A549 (cell line): ENCODE measurements at regions of chr1 and their contacts with region 1.

Region 1: GRCh38 chr1:225845571-225846259 is 35.8 kb downstream of the EPHX1 start:
- DNase-seq: peak; percentile 72 to 88
- ATAC-seq: peak; percentile 80 to 88
- H3K4me3 ChIP-seq: no peak overlapping the region
- H3K27ac ChIP-seq: peak overlapping the region in 1 of 2 experiments; percentile 60; a peak in 3 of 6 replicates
- H3K4me1 ChIP-seq: peaks cover 6% of the 10 kb centered on the region; the same call in 1 of the 3 replicates
- CTCF ChIP-seq: peak; percentile 66
- EP300 ChIP-seq: no peak
- POLR2A ChIP-seq: no peak
- RAD21 ChIP-seq: peak; percentile 85 to 93

Region 2: GRCh38 chr1:225480825-225481434 is 364.8 kb before region 1 on chr1:
- CTCF ChIA-PET with region 1: interaction called, 69 read pairs
- POLR2A ChIA-PET with region 1: no interaction called
- DNase-seq: peak; percentile 54 to 76
- ATAC-seq: peak; percentile 79 to 87
- H3K4me3 ChIP-seq: no peak overlapping the region
- H3K27ac ChIP-seq: no peak overlapping the region; a peak in 1 of 6 replicates
- H3K4me1 ChIP-seq: no peaks in the 10 kb centered on the region
- CTCF ChIP-seq: peak; percentile 72
- EP300 ChIP-seq: no peak
- POLR2A ChIP-seq: no peak
- RAD21 ChIP-seq: peak; percentile 79 to 85

Region 3: GRCh38 chr1:225670806-225671733 is 174.6 kb before region 1 on chr1:
- CTCF ChIA-PET with region 1: no interaction called
- POLR2A ChIA-PET with region 1: no interaction called
- DNase-seq: no peak
- ATAC-seq: 0 out of 6 replicates have a peak, but pooled peaks of 1 of the 2 experiments have one; percentile 19
- H3K4me3 ChIP-seq: no peak overlapping the region
- H3K27ac ChIP-seq: peak overlapping the region in 1 of 2 experiments; percentile 29; a peak in 1 of 6 replicates
- H3K4me1 ChIP-seq: 0 out of 3 replicates have a peak, but pooled peaks cover 3% of the 10 kb centered on the region
- CTCF ChIP-seq: no peak
- EP300 ChIP-seq: no peak
- POLR2A ChIP-seq: no peak
- RAD21 ChIP-seq: no peak

Region 4: DNA sequence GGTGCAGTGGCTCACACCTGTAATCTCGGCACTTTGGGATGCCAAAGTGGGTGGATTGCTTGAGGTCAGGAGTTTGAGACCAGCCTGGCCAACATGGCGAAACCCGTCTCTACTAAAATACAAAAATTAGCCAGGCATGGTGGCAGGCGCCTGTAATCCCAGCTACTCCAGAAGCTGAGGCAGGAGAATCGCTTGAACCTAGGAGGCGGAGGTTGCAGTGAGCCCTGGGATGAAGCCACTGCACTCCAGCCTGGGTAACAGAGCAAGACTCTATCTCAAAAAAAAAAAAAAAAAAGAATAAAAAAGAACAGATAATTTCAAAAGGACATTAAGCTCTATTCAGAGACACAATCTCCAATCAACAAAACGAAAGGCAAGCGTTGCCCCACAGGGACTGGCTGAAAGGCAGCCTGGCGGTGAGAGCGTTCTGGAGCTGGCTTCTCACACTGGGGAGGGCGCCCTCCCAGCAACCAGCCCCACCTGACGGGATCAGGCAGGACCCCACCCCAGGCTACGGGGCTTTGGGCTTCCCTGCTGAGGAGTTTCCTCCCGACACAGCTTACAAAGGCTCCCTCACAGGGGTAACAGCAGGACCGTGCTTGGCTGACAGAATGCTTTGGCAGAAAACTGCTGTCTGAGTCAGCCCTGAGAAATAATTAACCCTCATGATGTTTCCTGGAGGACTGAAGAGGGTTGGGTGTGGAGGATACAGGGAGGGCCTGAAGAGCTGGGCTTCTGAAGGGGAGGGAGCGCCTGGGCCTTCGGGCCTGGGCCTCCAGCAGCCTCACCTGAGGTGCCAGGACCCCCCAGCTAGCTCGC is 99.1 kb before region 1 on chr1:
- CTCF ChIA-PET with region 1: no interaction called
- POLR2A ChIA-PET with region 1: no interaction called
- DNase-seq: peak; percentile 88 to 89
- ATAC-seq: peak; percentile 98 to 99
- H3K4me3 ChIP-seq: peak overlapping the region; percentile 35
- H3K27ac ChIP-seq: peak overlapping the region; percentile 90 to 92
- H3K4me1 ChIP-seq: peaks cover 28% of the 10 kb centered on the region
- CTCF ChIP-seq: no peak
- EP300 ChIP-seq: no peak
- POLR2A ChIP-seq: 0 out of 2 replicates have a peak, but pooled peaks have one; percentile 5
- RAD21 ChIP-seq: peak; percentile 23 to 31; a peak in 2 of 5 replicates

Region 5: GRCh38 chr1:225809842-225810578 is 35.7 kb before region 1 on chr1 and contains the start of gene EPHX1:
- CTCF ChIA-PET with region 1: interaction called, 24 read pairs
- POLR2A ChIA-PET with region 1: no interaction called
- DNase-seq: peak; percentile 87 to 97
- ATAC-seq: peak; percentile 85 to 86
- H3K4me3 ChIP-seq: peak within 1 kb of the TSS; percentile 86
- H3K27ac ChIP-seq: peak within 1 kb of the TSS; percentile 93 to 99
- H3K4me1 ChIP-seq: peaks cover 40% of the 10 kb centered on the region
- CTCF ChIP-seq: peak; percentile 30; the same call in 2 of the 3 replicates
- EP300 ChIP-seq: 0 out of 5 replicates have a peak, but pooled peaks of 1 of the 2 experiments have one; percentile 8
- POLR2A ChIP-seq: peak; percentile 97
- RAD21 ChIP-seq: peak; percentile 25 to 37; a peak in 3 of 5 replicates
- polyA plus RNA-seq, gene EPHX1: 150 and 212 TPM in 2 replicates

Region 6: DNA sequence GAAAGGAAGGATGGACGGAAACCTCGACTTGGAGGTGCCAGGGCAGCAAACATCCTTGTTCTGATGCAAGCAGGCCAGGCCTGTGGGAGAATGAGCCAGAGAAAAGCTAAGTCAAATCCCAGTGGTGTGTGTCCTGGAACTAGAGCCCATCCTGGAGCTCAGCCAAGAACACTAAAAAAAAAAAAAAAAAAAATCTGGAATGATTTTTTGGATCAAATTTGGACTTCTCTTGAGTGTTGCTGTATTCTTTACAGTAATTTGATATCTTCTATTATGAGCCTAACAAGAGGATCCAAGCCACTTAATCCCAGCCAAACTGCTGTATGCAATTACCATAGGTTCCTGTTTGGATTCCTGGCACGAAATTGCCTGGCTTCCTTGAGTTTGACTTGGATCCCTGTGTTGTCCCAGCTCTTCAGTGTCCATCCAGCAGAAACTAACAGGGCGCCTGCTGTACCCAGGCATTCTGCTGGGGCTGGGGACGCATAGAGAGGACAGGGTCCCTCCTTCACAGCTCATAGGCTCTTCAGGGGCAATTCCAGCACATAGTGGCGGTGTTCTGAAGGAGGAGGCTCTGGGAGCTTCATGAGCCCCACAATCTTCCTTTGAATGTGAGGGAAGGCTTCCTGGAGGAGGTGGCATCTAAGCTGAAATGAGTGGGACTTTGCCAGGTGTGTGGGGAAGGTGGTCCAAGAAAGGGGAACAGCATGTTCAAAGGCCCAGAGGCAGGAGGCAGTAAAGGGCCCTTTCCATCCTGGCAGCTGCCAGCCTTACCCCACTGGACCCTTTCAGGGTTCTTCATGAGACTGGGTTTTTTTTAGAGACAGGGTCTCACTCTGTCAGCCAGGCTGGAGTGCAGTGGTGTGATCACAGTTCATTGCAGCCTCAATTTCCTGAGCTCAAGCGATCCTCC is 11.0 kb before region 1 on chr1:
- CTCF ChIA-PET with region 1: interaction called, 11 read pairs
- POLR2A ChIA-PET with region 1: no interaction called
- DNase-seq: no peak
- ATAC-seq: peak in 1 of 2 experiments; percentile 48; a peak in 3 of 6 replicates
- H3K4me3 ChIP-seq: no peak overlapping the region
- H3K27ac ChIP-seq: no peak overlapping the region
- H3K4me1 ChIP-seq: no peaks in the 10 kb centered on the region
- CTCF ChIP-seq: no peak
- EP300 ChIP-seq: no peak
- POLR2A ChIP-seq: no peak
- RAD21 ChIP-seq: no peak

Region 7: GRCh38 chr1:225977937-225978748 is 132.4 kb after region 1 on chr1:
- CTCF ChIA-PET with region 1: interaction called, 13 read pairs
- POLR2A ChIA-PET with region 1: no interaction called
- DNase-seq: no peak
- ATAC-seq: 0 out of 6 replicates have a peak, but pooled peaks of 1 of the 2 experiments have one; percentile 27
- H3K4me3 ChIP-seq: no peak overlapping the region
- H3K27ac ChIP-seq: no peak overlapping the region
- H3K4me1 ChIP-seq: no peaks in the 10 kb centered on the region
- CTCF ChIP-seq: no peak
- EP300 ChIP-seq: no peak
- POLR2A ChIP-seq: no peak
- RAD21 ChIP-seq: no peak